ENCODE measurements at regions of chr2 and their contacts with region 1.

Region 1: GRCh38 chr2:45169339-45170190 is 160.3 kb upstream of the SIX2 start:
- DNase-seq: peak; percentile 50
- H3K4me3 ChIP-seq: peak overlapping the region; percentile 61 to 77 (median 64)
- H3K27ac ChIP-seq: no peak overlapping the region
- H3K4me1 ChIP-seq: peaks cover 9% of the 10 kb centered on the region
- H3K27me3 ChIP-seq: peaks cover 5 to 13% of the 10 kb centered on the region in 2 experiments
- CTCF ChIP-seq: no peak
- POLR2A ChIP-seq: peak; percentile 68

Region 2: DNA sequence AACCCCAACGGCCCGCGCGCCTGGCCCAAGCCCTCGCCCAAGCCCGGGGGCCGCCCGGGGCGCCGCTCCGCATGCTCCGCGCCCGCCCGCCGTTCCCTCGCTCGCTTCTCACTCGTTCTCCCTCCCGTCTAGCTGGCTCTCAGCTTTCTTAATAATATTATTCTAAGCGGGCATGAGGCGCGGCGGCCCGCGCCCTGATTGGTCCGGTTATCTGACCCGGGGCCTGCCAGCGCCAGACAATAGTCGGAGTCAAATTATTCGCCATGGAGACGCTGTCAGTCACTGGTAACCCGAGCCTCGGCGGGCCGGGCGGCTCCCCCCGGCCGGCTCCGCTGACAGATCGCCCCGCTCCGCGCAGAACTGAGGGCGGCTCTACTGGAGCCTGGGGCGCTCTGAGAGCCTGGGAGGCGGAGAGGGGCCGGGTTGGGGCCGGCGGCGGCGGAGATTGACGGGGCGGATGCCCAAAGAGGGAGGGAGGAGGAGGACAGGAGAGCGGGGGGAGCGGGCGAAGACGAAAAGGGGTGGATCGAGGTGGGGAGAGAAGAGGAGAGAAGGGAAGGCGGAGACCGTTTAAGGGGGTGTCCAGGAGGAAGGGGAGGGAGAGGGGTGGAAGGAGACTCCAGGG is 160.2 kb before region 1 on chr2 and contains the start of gene SIX2:
- CTCF ChIA-PET with region 1: interaction called, 3 read pairs
- POLR2A ChIA-PET with region 1: no interaction called
- dilution Hi-C with region 1: no loop called
- intact Hi-C with region 1: loop called (anchors 5 kb)
- DNase-seq: peak; percentile 97
- H3K4me3 ChIP-seq: peak within 1 kb of the TSS; percentile 15 to 48 (median 38)
- H3K27ac ChIP-seq: no peak within 1 kb of the TSS
- H3K4me1 ChIP-seq: peaks cover 26% of the 10 kb centered on the region
- H3K27me3 ChIP-seq: peaks cover 62 to 85% of the 10 kb centered on the region in 2 experiments
- CTCF ChIP-seq: no peak
- POLR2A ChIP-seq: no peak
- total RNA-seq, gene SIX2: 0.24 and 0.32 TPM in 2 replicates

Region 3: DNA sequence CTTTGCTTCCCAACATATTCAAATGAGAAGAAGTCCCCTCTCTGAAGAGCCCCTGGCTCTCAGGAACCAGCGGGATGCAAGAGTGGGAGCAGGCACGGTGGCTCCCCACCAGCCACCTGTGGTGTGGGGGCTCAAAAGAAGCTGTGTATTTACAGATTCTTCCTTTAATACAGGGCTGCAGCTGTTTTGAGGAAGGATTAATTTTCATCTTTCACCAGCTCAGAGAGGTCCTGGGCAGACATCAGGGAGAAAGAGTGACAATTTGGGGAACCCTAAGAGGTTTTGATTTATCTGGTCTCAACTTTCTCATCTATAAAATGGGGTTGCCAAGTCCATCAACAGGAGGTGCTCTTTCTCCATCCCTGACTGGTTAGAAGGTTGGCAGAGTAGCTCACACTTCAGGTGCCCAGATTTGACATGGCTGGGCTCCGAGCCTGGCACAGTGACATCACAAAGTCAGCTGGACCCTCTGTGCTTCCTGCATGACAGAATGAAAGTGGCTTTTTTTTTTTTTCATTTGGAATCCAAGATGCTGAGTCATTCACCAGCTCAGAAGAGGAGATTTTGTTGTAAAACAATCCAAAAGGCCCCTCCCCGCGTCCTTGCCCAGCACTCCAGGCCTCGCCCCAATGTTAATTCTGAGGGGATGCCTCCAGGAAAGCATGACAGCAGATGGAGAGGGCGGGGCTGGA is 144.8 kb before region 1 on chr2:
- CTCF ChIA-PET with region 1: interaction called, 5 read pairs
- POLR2A ChIA-PET with region 1: no interaction called
- dilution Hi-C with region 1: no loop called
- intact Hi-C with region 1: loop called (anchors 5 kb)
- DNase-seq: peak; percentile 74
- H3K4me3 ChIP-seq: no peak overlapping the region
- H3K27ac ChIP-seq: peak overlapping the region; percentile 8
- H3K4me1 ChIP-seq: no peaks in the 10 kb centered on the region
- H3K27me3 ChIP-seq: peaks cover 2 to 6% of the 10 kb centered on the region in 2 experiments
- CTCF ChIP-seq: peak; percentile 4 to 28
- POLR2A ChIP-seq: no peak

Region 4: DNA sequence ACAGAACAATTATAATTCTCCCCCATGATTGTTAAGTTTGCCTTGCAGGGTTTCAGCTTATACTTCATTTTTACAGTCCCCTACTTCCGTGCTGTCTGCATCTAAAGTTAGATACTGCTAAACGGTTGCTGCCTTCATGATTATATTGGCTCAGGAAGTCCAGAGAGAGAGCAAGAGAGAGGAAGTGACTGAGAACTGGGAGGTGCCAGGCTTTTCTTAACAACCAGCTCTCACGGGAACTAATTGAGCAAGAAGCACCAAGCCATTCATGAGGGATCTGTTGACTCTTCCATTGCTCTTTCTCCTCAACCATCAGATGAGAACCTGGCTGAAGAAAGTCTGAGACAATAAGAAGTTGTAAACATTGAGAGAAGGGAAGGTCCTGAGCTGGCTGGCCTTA is 34.8 kb before region 1 on chr2:
- CTCF ChIA-PET with region 1: no interaction called
- POLR2A ChIA-PET with region 1: no interaction called
- dilution Hi-C with region 1: no loop called
- intact Hi-C with region 1: loop called (anchors 5 kb)
- DNase-seq: peak; percentile 62
- H3K4me3 ChIP-seq: no peak overlapping the region
- H3K27ac ChIP-seq: no peak overlapping the region
- H3K4me1 ChIP-seq: peaks cover 28% of the 10 kb centered on the region
- H3K27me3 ChIP-seq: no peaks in the 10 kb centered on the region
- CTCF ChIP-seq: no peak
- POLR2A ChIP-seq: no peak

Region 5: DNA sequence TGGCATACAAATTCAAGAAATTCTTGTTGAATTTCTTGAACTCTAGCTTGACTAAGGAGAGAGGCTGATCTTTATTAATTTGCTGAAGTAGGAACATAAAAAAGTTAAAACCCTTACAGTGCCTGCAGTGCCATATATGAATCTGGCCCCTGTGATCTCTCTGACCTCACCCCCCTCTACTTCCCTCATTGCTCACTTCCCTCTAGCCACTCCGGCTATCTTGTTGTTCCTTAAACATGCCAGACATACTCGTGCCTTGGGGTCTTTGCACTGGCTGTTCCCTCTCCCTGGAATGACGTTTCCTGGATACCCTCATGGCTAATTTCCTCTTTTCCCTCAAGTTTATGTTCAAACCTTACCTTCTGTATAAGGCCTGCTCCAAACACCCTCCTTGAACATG is 86.0 kb after region 1 on chr2:
- CTCF ChIA-PET with region 1: no interaction called
- POLR2A ChIA-PET with region 1: no interaction called
- dilution Hi-C with region 1: no loop called
- intact Hi-C with region 1: no loop called
- DNase-seq: peak; percentile 44
- H3K4me3 ChIP-seq: no peak overlapping the region
- H3K27ac ChIP-seq: peak overlapping the region; percentile 42
- H3K4me1 ChIP-seq: peaks cover 42% of the 10 kb centered on the region
- H3K27me3 ChIP-seq: no peaks in the 10 kb centered on the region
- CTCF ChIP-seq: no peak
- POLR2A ChIP-seq: no peak

Region 6: GRCh38 chr2:45289997-45290709 is 120.6 kb after region 1 on chr2:
- CTCF ChIA-PET with region 1: interaction called, 3 read pairs
- POLR2A ChIA-PET with region 1: no interaction called
- dilution Hi-C with region 1: no loop called
- intact Hi-C with region 1: loop called (anchors 5 kb)
- DNase-seq: no peak
- H3K4me3 ChIP-seq: no peak overlapping the region
- H3K27ac ChIP-seq: peak overlapping the region; percentile 3
- H3K4me1 ChIP-seq: peaks cover 54% of the 10 kb centered on the region
- H3K27me3 ChIP-seq: no peaks in the 10 kb centered on the region
- CTCF ChIP-seq: no peak
- POLR2A ChIP-seq: no peak

Region 7: GRCh38 chr2:45353879-45354278 is 184.3 kb after region 1 on chr2:
- CTCF ChIA-PET with region 1: interaction called, 6 read pairs
- POLR2A ChIA-PET with region 1: interaction called, 4 read pairs
- dilution Hi-C with region 1: no loop called
- intact Hi-C with region 1: loop called (anchors 5 kb)
- DNase-seq: peak; percentile 97
- H3K4me3 ChIP-seq: no peak overlapping the region
- H3K27ac ChIP-seq: peak overlapping the region; percentile 85
- H3K4me1 ChIP-seq: peaks cover 17% of the 10 kb centered on the region
- H3K27me3 ChIP-seq: no peaks in the 10 kb centered on the region
- CTCF ChIP-seq: no peak
- POLR2A ChIP-seq: peak; percentile 38

Region 8: GRCh38 chr2:45494269-45494977 is 324.9 kb after region 1 on chr2:
- CTCF ChIA-PET with region 1: interaction called, 6 read pairs
- POLR2A ChIA-PET with region 1: interaction called, 4 read pairs
- dilution Hi-C with region 1: no loop called
- intact Hi-C with region 1: loop called (anchors 2 kb)
- DNase-seq: peak; percentile 78
- H3K4me3 ChIP-seq: no peak overlapping the region
- H3K27ac ChIP-seq: no peak overlapping the region
- H3K4me1 ChIP-seq: peaks cover 4% of the 10 kb centered on the region
- H3K27me3 ChIP-seq: no peaks in the 10 kb centered on the region
- CTCF ChIP-seq: peak; percentile 45
- POLR2A ChIP-seq: no peak

Measured in endothelial cell of umbilical vein (primary cell).